Activated B cell treated with CpG ODN at 0.5 μM for 24 hours (primary cell): ENCODE measurements at regions of chr12 and their contacts with region 1.

Region 1: GRCh38 chr12:15789220-15790171 is at the start of gene EPS8:
- DNase-seq: peak; percentile 91
- ATAC-seq: peak; percentile 96
- H3K4me3 Mint-ChIP-seq: peak within 1 kb of the TSS; percentile 91
- H3K27ac Mint-ChIP-seq: peak within 1 kb of the TSS; percentile 46
- H3K4me1 Mint-ChIP-seq: peaks cover 14% of the 10 kb centered on the region
- H3K27me3 Mint-ChIP-seq: peaks cover 47% of the 10 kb centered on the region
- CTCF ChIP-seq: no peak
- total RNA-seq, gene EPS8: 0.73 and 0.89 TPM in 2 replicates

Region 2: GRCh38 chr12:15256766-15257165 is 532.7 kb before region 1 on chr12:
- CTCF ChIA-PET with region 1: no interaction called
- POLR2A ChIA-PET with region 1: no interaction called
- intact Hi-C with region 1: no loop called
- DNase-seq: no peak
- ATAC-seq: no peak
- H3K4me3 Mint-ChIP-seq: no peak overlapping the region
- H3K27ac Mint-ChIP-seq: no peak overlapping the region
- H3K4me1 Mint-ChIP-seq: no peaks in the 10 kb centered on the region
- H3K27me3 Mint-ChIP-seq: peaks cover 16% of the 10 kb centered on the region
- CTCF ChIP-seq: no peak

Region 3: DNA sequence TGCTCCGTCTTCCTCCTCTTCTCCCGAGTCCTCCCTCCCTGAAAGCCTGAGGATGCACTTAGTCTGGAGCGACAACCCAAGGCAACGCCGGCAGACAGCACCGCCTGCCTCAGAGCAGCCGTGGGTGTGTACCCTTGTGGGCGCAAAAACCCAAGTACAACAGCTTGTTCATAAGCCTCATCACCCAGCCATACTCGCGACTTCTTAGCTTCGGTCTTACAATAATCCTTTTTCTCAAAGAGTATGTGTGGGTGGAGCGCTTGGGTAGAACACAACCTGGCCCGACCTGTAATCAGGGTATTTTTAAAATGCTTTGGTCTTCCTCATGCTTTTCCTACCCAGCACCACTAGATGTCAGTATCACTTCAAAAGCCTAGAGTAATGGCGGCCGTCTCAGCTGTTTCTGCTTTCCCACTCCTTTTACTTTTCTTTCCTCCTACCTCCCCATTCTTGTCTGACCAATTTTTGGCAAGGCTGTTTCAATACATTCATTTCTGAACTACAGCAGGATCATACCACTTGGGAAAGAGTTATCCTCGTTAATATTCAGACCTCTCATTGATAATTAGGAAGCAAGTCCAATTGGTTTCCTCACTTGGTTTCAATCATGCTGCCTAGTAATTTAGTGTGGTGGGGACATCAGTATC is 199.2 kb before region 1 on chr12:
- CTCF ChIA-PET with region 1: no interaction called
- POLR2A ChIA-PET with region 1: no interaction called
- intact Hi-C with region 1: loop called (anchors 10 kb)
- DNase-seq: peak; percentile 22
- ATAC-seq: peak; percentile 98
- H3K4me3 Mint-ChIP-seq: peak overlapping the region; percentile 72
- H3K27ac Mint-ChIP-seq: peak overlapping the region; percentile 14
- H3K4me1 Mint-ChIP-seq: peaks cover 9% of the 10 kb centered on the region
- H3K27me3 Mint-ChIP-seq: no peaks in the 10 kb centered on the region
- CTCF ChIP-seq: peak; percentile 55